Lower lobe of right lung (tissue), 2 donors: ENCODE measurements at regions of chr3 and their contacts with region 1.

Region 1: GRCh38 chr3:108552267-108553159 is 36.7 kb downstream of the CIP2A start:
- DNase-seq: no peak
- ATAC-seq: peak; percentile 66 to 74
- H3K4me3 ChIP-seq: no peak overlapping the region
- H3K27ac ChIP-seq: no peak overlapping the region
- H3K4me1 ChIP-seq: peaks cover 9% of the 10 kb centered on the region
- H3K27me3 ChIP-seq: no peaks in the 10 kb centered on the region
- CTCF ChIP-seq: peak; percentile 53

Region 2: DNA sequence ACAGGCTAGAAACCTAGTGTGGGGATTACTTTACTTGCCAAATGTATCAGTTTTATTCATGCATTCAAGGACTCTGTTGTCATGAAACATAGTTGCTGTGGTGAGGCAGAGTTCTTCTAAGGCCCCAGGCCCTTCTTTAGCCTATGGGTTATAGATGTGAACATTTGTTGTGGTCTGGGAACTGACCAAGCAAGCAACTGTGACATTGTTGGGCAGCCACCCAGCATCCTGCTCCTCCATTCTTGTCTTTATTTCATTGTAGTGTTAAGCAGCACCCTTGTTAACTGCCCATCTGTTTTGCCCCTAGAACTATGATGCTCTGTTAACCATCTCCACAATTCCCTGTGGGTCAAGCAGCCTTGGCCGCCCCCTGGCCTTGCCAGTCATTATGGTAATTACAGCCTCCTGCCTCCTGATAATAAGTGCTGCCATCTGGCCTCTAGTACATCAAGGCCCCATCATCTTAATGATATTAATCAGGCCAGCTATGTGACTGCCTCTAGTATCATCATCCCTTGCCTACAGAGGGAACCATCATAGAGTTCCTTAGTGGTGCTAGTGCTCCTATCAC is 318.0 kb before region 1 on chr3:
- intact Hi-C with region 1: no loop called
- DNase-seq: no peak
- ATAC-seq: no peak
- H3K4me3 ChIP-seq: no peak overlapping the region
- H3K27ac ChIP-seq: no peak overlapping the region
- H3K4me1 ChIP-seq: no peaks in the 10 kb centered on the region
- H3K27me3 ChIP-seq: no peaks in the 10 kb centered on the region
- CTCF ChIP-seq: no peak

Region 3: DNA sequence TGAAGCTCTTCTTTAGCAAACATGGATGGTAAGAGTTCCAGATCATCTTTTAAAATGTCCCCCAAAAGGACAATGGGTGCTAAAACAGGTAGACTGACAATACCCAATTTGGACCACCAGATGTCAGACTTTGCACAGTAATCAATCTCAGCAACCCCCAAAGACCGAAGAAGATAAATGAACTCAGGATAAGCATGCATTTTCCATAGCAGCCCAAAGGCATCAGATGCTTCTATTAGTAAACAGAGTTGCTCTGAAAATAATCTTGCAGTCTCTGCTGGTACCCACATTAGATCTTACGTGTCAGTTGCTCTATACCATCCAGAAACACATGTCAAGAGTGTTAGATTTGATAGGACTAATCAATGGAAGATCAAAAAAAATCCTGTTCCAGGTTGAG is 62.7 kb before region 1 on chr3:
- intact Hi-C with region 1: loop called (anchors 5 kb)
- DNase-seq: no peak
- ATAC-seq: peak; percentile 69 to 76
- H3K4me3 ChIP-seq: no peak overlapping the region
- H3K27ac ChIP-seq: no peak overlapping the region
- H3K4me1 ChIP-seq: no peaks in the 10 kb centered on the region
- H3K27me3 ChIP-seq: no peaks in the 10 kb centered on the region
- CTCF ChIP-seq: peak; percentile 72

Region 4: DNA sequence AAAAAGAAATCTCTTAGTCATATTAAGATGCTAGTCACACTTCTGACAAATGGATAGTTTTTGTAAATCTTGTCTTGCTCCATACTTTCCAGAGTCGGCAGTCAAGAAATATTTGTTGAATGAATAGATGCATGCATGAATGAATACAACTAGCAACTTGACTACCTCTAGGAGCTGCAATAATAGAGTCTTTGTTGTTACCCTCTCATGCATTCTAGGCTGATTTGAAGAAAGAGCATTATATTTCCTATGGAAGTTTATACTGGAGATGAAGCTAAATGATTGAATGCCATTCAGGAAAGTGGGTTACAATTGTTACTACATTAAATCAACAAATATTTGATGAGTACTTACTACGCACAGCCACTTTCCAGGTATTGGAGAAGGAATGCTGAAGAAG is 251.9 kb after region 1 on chr3:
- intact Hi-C with region 1: no loop called
- DNase-seq: no peak
- ATAC-seq: no peak
- H3K4me3 ChIP-seq: no peak overlapping the region
- H3K27ac ChIP-seq: no peak overlapping the region
- H3K4me1 ChIP-seq: no peaks in the 10 kb centered on the region
- H3K27me3 ChIP-seq: no peaks in the 10 kb centered on the region
- CTCF ChIP-seq: no peak